ENCODE measurements at regions of chr3 and their contacts with region 1.

Region 1: DNA sequence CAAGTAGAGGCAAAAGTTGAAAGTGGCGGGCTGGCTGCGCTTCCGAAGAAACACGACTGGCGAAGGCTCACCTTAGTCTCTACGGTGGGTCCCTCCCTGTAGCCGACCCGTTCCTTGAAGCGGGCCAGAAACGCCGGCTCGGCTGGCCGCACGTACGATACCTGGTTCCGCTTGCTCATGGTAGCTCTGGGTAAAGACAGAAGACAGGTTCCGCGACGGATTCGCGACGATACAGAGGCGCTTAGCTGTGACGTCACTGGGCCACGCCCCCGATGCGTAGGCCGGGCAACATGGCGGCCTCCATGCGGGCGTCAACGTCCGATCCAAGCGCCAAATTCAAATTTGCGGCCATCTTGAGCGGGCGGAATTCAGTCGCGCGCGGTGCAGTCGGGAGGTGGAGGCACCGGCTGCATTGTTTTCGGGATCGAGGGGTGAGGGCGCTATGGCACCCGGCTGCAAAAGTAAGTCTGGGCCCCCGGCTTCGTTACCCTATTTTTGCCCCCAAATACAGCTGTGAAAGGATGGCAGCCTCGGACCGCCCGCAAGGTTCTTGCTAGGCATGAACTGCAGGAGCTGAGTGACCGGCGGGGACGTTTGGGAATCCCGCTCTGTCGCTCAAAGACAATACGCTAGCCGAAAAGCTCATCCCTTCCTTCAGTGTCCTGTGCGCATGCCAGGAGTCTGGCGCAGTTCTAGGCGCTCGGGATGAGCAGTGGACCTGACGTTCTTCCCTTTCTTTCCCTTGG is at the starts of genes KIAA1143 and KIF15:
- DNase-seq: peak; percentile 98
- ATAC-seq: peak; percentile 96
- H3K4me3 Mint-ChIP-seq: peak within 1 kb of the TSS; percentile 95
- H3K27ac Mint-ChIP-seq: peak within 1 kb of the TSS; percentile 93
- H3K4me1 Mint-ChIP-seq: peaks cover 33% of the 10 kb centered on the region
- H3K27me3 Mint-ChIP-seq: no peaks in the 10 kb centered on the region
- total RNA-seq, gene KIAA1143: 38.7 to 39.8 TPM
- total RNA-seq, gene KIF15: 62.2 to 66.4 TPM

Region 2: GRCh38 chr3:44338010-44338827 is 423.4 kb before region 1 on chr3 and contains the start of gene TCAIM:
- CTCF ChIA-PET with region 1: no interaction called
- POLR2A ChIA-PET with region 1: interaction called, 10 read pairs
- DNase-seq: peak; percentile 99
- ATAC-seq: peak; percentile 98
- H3K4me3 Mint-ChIP-seq: peak within 1 kb of the TSS; percentile 99
- H3K27ac Mint-ChIP-seq: peak within 1 kb of the TSS; percentile 100
- H3K4me1 Mint-ChIP-seq: peaks cover 24% of the 10 kb centered on the region
- H3K27me3 Mint-ChIP-seq: peaks cover 14% of the 10 kb centered on the region
- total RNA-seq, gene TCAIM: 17.9 to 21.8 TPM

Region 3: GRCh38 chr3:44729384-44729910 is 32.1 kb before region 1 on chr3 and contains the start of gene ZNF501:
- CTCF ChIA-PET with region 1: interaction called, 6 read pairs
- POLR2A ChIA-PET with region 1: interaction called, 16 read pairs
- DNase-seq: peak; percentile 93
- ATAC-seq: peak; percentile 97
- H3K4me3 Mint-ChIP-seq: peak within 1 kb of the TSS; percentile 94
- H3K27ac Mint-ChIP-seq: peak within 1 kb of the TSS; percentile 95
- H3K4me1 Mint-ChIP-seq: peaks cover 14% of the 10 kb centered on the region
- H3K27me3 Mint-ChIP-seq: no peaks in the 10 kb centered on the region
- total RNA-seq, gene ZNF501: 2.9 to 3.6 TPM

Measured in activated CD8-positive, alpha-beta T cell treated with anti-CD3 and anti-CD28 coated beads, Interleukin-2, amount 10 ng/mL, durations not matched to agents 7 days and 5 days (primary cell).